ENCODE measurements at regions of chr11 and their contacts with region 1.

Region 1: DNA sequence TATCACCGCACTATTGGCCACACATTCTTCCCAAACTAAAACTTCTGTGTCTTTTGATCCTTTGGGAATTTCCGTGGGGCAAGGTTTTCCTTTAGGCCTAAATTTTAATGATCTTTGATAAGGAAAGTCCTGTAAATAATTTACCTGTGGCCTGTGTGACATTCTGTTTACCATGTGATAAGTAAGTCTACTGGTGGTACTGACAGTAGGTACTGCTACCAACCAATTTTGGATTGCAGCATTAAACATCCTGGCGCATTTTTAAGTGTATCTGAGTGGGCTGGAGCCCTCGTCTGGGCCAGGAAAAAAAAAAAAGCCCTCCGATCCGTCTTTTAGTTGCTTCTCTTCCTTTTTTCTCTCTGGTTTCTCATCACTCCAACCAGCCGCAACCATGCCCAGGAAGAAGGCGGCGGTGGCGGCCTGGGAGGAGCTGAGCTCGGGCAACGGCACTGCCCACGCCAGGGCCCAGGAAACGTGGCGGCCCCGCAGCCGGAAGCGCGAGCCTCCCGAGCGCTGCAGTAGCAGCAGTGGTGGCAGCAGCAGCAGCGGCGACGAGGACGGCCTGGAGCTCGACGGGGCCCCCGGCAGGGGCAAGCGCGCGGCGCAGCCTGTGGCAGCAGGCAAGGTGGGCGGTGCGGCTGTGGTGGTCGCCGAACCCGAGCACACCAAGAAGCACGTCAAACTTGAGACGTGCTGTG is 33.6 kb downstream of the ASRGL1 start:
- DNase-seq: peak; percentile 25
- ATAC-seq: peak; percentile 82
- H3K4me3 Mint-ChIP-seq: peak overlapping the region; percentile 77
- H3K27ac Mint-ChIP-seq: peak overlapping the region; percentile 74
- H3K4me1 Mint-ChIP-seq: no peaks in the 10 kb centered on the region
- H3K27me3 Mint-ChIP-seq: no peaks in the 10 kb centered on the region
- CTCF ChIP-seq: no peak

Region 2: GRCh38 chr11:62747475-62748160 is 376.7 kb after region 1 on chr11:
- CTCF ChIA-PET with region 1: no interaction called
- POLR2A ChIA-PET with region 1: interaction called, 12 read pairs
- intact Hi-C with region 1: no loop called
- DNase-seq: no peak
- ATAC-seq: no peak
- H3K4me3 Mint-ChIP-seq: no peak overlapping the region
- H3K27ac Mint-ChIP-seq: no peak overlapping the region
- H3K4me1 Mint-ChIP-seq: peaks cover 5% of the 10 kb centered on the region
- H3K27me3 Mint-ChIP-seq: no peaks in the 10 kb centered on the region
- CTCF ChIP-seq: no peak

Measured in activated B cell treated with CpG ODN at 0.5 μM for 24 hours (primary cell).